ENCODE measurements at regions of chr3 and their contacts with region 1.

Region 1: GRCh38 chr3:195850857-195851543 is 39.3 kb upstream of the MUC4 start:
- DNase-seq: peak; percentile 96
- ATAC-seq: peak; percentile 100
- H3K4me3 Mint-ChIP-seq: peak overlapping the region; percentile 24
- H3K27ac Mint-ChIP-seq: no peak overlapping the region
- H3K4me1 Mint-ChIP-seq: peaks cover 7% of the 10 kb centered on the region
- H3K27me3 Mint-ChIP-seq: peaks cover 9% of the 10 kb centered on the region
- CTCF ChIP-seq: peak; percentile 100

Region 2: GRCh38 chr3:195716865-195717210 is 134.2 kb before region 1 on chr3:
- CTCF ChIA-PET with region 1: interaction called, 13 read pairs
- POLR2A ChIA-PET with region 1: interaction called, 5 read pairs
- intact Hi-C with region 1: no loop called
- DNase-seq: no peak
- ATAC-seq: no peak
- H3K4me3 Mint-ChIP-seq: no peak overlapping the region
- H3K27ac Mint-ChIP-seq: no peak overlapping the region
- H3K4me1 Mint-ChIP-seq: peaks cover 5% of the 10 kb centered on the region
- H3K27me3 Mint-ChIP-seq: peaks cover 1% of the 10 kb centered on the region
- CTCF ChIP-seq: no peak

Region 3: DNA sequence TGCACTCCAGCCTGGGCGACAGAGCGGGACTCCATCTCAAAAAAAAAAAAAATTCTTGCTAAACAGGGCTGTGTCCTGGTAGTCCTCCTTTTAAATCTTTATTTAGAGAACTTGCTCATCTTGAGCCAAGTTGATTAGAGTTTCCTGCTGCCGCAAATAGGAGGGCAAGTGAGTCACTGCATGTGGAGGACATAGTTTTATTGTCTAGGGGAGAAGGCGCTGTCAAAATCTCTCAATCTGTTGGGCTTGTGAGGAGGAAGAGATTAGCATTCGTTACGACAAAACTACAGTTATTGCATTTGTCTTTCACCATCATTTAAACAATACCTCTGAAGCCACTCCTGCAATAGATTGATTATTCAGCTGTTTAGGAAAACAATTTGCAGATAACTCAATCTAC is 50.8 kb before region 1 on chr3:
- CTCF ChIA-PET with region 1: interaction called, 15 read pairs
- POLR2A ChIA-PET with region 1: no interaction called
- intact Hi-C with region 1: no loop called
- DNase-seq: no peak
- ATAC-seq: no peak
- H3K4me3 Mint-ChIP-seq: no peak overlapping the region
- H3K27ac Mint-ChIP-seq: no peak overlapping the region
- H3K4me1 Mint-ChIP-seq: peaks cover 40% of the 10 kb centered on the region
- H3K27me3 Mint-ChIP-seq: peaks cover 23% of the 10 kb centered on the region
- CTCF ChIP-seq: no peak

Region 4: DNA sequence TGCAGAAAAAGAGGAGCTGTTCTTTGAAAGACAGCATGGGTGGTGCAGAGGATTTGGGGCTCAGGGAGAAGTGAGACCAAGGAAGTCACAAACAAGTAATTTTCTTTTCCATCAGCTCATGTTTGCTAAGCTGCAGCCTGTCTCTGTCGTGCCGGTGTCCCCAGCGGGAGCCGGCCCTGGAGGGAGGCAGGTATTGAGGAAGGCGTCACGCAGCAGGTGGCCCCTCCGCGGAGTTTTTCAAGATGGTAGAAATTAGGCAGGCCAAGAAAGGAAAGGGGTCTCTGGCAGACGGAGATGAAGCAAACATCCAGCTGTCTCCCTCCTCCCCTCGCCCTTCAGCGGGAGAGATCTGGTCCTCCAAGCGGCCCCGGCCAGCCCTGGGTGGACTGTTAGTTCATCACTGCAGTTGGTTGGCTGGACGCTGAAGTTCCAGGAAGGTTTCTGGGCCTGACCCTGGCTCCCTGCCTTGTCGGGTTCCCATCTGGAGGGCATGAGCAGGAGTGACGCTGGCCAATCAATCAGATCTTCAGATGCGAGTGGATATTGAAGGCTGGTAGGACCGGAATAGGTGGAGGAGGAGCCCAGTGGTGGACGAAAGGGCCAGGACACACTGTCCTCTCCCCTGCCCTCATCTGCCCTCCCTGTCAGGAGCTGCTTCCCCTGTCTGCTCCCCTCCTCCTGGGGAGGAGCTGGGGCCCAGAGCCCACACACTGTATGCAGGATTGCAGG is 11.6 kb before region 1 on chr3:
- CTCF ChIA-PET with region 1: interaction called, 35 read pairs
- POLR2A ChIA-PET with region 1: interaction called, 3 read pairs
- intact Hi-C with region 1: no loop called
- DNase-seq: no peak
- ATAC-seq: no peak
- H3K4me3 Mint-ChIP-seq: no peak overlapping the region
- H3K27ac Mint-ChIP-seq: no peak overlapping the region
- H3K4me1 Mint-ChIP-seq: no peaks in the 10 kb centered on the region
- H3K27me3 Mint-ChIP-seq: no peaks in the 10 kb centered on the region
- CTCF ChIP-seq: no peak

Region 5: DNA sequence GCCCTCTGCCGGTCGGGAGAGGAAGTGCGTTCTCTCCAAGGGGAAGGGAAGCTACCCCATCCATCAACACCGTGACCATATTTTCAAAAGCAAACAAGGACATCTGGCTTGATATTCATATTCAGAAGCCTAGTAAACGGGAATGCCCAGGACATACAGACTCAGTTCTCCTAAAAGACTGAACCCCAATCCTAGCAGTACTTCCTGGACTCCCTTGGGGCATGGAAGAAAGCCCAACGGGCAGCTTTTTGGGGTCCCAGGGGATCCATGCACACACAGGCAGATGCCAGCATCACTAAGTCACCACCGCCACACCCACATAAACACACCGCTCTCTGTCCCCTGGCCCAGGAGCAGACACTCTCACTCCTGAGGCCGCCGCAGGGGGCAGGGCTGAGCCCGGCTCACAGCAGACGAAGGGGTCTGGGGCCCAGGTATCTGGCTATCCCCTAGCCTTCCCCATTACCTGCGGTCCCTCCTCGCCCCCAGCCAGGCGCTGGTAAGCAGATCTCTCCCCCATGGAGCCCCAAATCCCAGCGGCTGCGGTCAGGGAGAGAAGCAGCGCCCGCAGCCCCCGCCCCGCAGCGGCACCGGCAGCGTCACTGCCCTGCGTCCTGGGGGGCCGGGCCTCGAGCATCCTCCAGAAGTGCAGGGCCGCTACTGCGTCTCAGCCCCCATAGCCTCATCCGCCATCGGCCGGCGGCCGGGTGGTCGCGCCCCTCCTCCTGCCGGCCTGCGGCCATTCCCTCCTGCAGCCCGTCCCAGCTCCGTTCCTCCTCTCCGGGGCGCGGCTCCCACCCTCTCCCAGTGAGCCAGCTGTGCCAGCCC is 44.0 kb after region 1 on chr3:
- CTCF ChIA-PET with region 1: interaction called, 59 read pairs
- POLR2A ChIA-PET with region 1: no interaction called
- intact Hi-C with region 1: no loop called
- DNase-seq: peak; percentile 87
- ATAC-seq: peak; percentile 80
- H3K4me3 Mint-ChIP-seq: peak overlapping the region; percentile 80
- H3K27ac Mint-ChIP-seq: peak overlapping the region; percentile 85
- H3K4me1 Mint-ChIP-seq: peaks cover 38% of the 10 kb centered on the region
- H3K27me3 Mint-ChIP-seq: no peaks in the 10 kb centered on the region
- CTCF ChIP-seq: peak; percentile 92

Measured in activated CD8-positive, alpha-beta T cell treated with anti-CD3 and anti-CD28 coated beads for 36 hours (primary cell).